HepG2 (cell line): ENCODE measurements at regions of chr20 and their contacts with region 1.

Region 1: GRCh38 chr20:478949-479429 is 16.7 kb upstream of the TBC1D20 start:
- DNase-seq: peak; percentile 84
- ATAC-seq: peak; percentile 60
- H3K4me3 ChIP-seq: no peak overlapping the region
- H3K27ac ChIP-seq: no peak overlapping the region
- H3K4me1 ChIP-seq: peaks cover 56% of the 10 kb centered on the region
- H3K27me3 ChIP-seq: no peaks in the 10 kb centered on the region
- CTCF ChIP-seq: peak; percentile 81
- EP300 ChIP-seq: 0 out of 4 replicates have a peak, but pooled peaks of 1 of the 2 experiments have one; percentile 25
- POLR2A ChIP-seq: no peak
- RAD21 ChIP-seq: peak; percentile 82

Region 2: GRCh38 chr20:462199-462991 is 16.6 kb before region 1 on chr20 and contains the start of gene TBC1D20:
- CTCF ChIA-PET with region 1: interaction called, 5 read pairs
- POLR2A ChIA-PET with region 1: interaction called, 9 read pairs
- in situ Hi-C with region 1: no loop called
- intact Hi-C with region 1: loop called (anchors 1 kb)
- DNase-seq: peak; percentile 87
- ATAC-seq: peak; percentile 95
- H3K4me3 ChIP-seq: peak within 1 kb of the TSS; percentile 81 to 96 (median 91)
- H3K27ac ChIP-seq: peak within 1 kb of the TSS; percentile 75
- H3K4me1 ChIP-seq: peaks cover 41% of the 10 kb centered on the region
- H3K27me3 ChIP-seq: no peaks in the 10 kb centered on the region; a peak in 2 of 5 replicates
- CTCF ChIP-seq: peak; percentile 74
- EP300 ChIP-seq: peak in 1 of 2 experiments; percentile 61; a peak in 1 of 4 replicates
- POLR2A ChIP-seq: peak; percentile 76 to 93
- RAD21 ChIP-seq: peak; percentile 37
- total RNA-seq, gene TBC1D20: 36.6 and 45.9 TPM in 2 replicates

Region 3: GRCh38 chr20:513429-513828 is 34.4 kb after region 1 on chr20:
- CTCF ChIA-PET with region 1: interaction called, 3 read pairs
- POLR2A ChIA-PET with region 1: interaction called, 8 read pairs
- in situ Hi-C with region 1: no loop called
- intact Hi-C with region 1: loop called (anchors 5 kb)
- DNase-seq: no peak
- ATAC-seq: no peak
- H3K4me3 ChIP-seq: no peak overlapping the region
- H3K27ac ChIP-seq: no peak overlapping the region
- H3K4me1 ChIP-seq: peaks cover 91% of the 10 kb centered on the region
- H3K27me3 ChIP-seq: no peaks in the 10 kb centered on the region
- CTCF ChIP-seq: no peak
- EP300 ChIP-seq: no peak
- POLR2A ChIP-seq: no peak
- RAD21 ChIP-seq: no peak